CD4-positive, alpha-beta T cell (primary cell): ENCODE measurements at regions of chr11 and their contacts with region 1.

Region 1: GRCh38 chr11:66311965-66312548 is 4.8 kb downstream of the CD248 start:
- DNase-seq: peak; percentile 91 to 100 (median 99)
- ATAC-seq: peak; percentile 74
- H3K4me3 ChIP-seq: peak overlapping the region; percentile 61
- H3K4me3 Mint-ChIP-seq: peak overlapping the region; percentile 90
- H3K27ac ChIP-seq: peak overlapping the region; percentile 65 to 90
- H3K27ac Mint-ChIP-seq: peak overlapping the region; percentile 95
- H3K4me1 ChIP-seq: peaks cover 51% of the 10 kb centered on the region
- H3K4me1 Mint-ChIP-seq: peaks cover 22% of the 10 kb centered on the region
- H3K27me3 ChIP-seq: no peaks in the 10 kb centered on the region
- H3K27me3 Mint-ChIP-seq: peaks cover 4% of the 10 kb centered on the region
- CTCF ChIP-seq: peak; percentile 97

Region 2: DNA sequence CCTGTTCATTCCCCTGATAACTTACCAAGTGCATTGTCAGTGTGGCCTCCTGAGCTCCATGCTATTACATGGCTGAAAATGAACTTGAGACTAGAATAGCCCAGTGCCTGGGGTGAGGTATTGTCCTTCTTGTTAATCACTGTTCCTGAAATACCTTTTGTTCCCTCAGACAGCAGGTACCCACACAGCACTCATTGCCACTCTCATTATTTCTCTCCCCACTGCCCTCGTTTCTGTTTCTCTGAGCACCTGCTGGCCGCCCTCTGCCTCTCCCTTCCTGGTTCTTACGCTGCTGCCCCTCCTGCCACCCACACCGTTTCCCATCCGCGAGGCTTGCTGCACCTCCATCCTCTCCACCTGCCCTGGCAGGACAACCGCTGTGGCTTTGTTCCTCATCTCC is 80.5 kb before region 1 on chr11:
- CTCF ChIA-PET with region 1: no interaction called
- POLR2A ChIA-PET with region 1: no interaction called
- intact Hi-C with region 1: no loop called
- DNase-seq: no peak
- ATAC-seq: no peak
- H3K4me3 ChIP-seq: no peak overlapping the region
- H3K4me3 Mint-ChIP-seq: no peak overlapping the region
- H3K27ac ChIP-seq: no peak overlapping the region
- H3K27ac Mint-ChIP-seq: no peak overlapping the region
- H3K4me1 ChIP-seq: no peaks in the 10 kb centered on the region
- H3K4me1 Mint-ChIP-seq: no peaks in the 10 kb centered on the region
- H3K27me3 ChIP-seq: no peaks in the 10 kb centered on the region
- H3K27me3 Mint-ChIP-seq: no peaks in the 10 kb centered on the region
- CTCF ChIP-seq: no peak

Region 3: GRCh38 chr11:66328307-66329144 is 16.5 kb after region 1 on chr11:
- CTCF ChIA-PET with region 1: interaction called, 30 read pairs
- POLR2A ChIA-PET with region 1: interaction called, 39 read pairs
- intact Hi-C with region 1: loop called (anchors 1 kb)
- DNase-seq: peak; percentile 68 to 92 (median 77)
- ATAC-seq: peak; percentile 90
- H3K4me3 ChIP-seq: no peak overlapping the region
- H3K4me3 Mint-ChIP-seq: peak overlapping the region; percentile 42
- H3K27ac ChIP-seq: no peak overlapping the region
- H3K27ac Mint-ChIP-seq: peak overlapping the region; percentile 85
- H3K4me1 ChIP-seq: peaks cover 46% of the 10 kb centered on the region
- H3K4me1 Mint-ChIP-seq: peaks cover 39% of the 10 kb centered on the region
- H3K27me3 ChIP-seq: no peaks in the 10 kb centered on the region
- H3K27me3 Mint-ChIP-seq: no peaks in the 10 kb centered on the region
- CTCF ChIP-seq: peak; percentile 93

Region 4: GRCh38 chr11:66344550-66345315 is 32.7 kb after region 1 on chr11 and contains the start of gene BRMS1:
- CTCF ChIA-PET with region 1: interaction called, 24 read pairs
- POLR2A ChIA-PET with region 1: interaction called, 26 read pairs
- intact Hi-C with region 1: loop called (anchors 1 kb)
- DNase-seq: peak; percentile 86 to 98 (median 96)
- ATAC-seq: peak; percentile 80
- H3K4me3 ChIP-seq: peak within 1 kb of the TSS; percentile 100
- H3K4me3 Mint-ChIP-seq: peak within 1 kb of the TSS; percentile 97
- H3K27ac ChIP-seq: peak within 1 kb of the TSS; percentile 75 to 78
- H3K27ac Mint-ChIP-seq: peak within 1 kb of the TSS; percentile 94
- H3K4me1 ChIP-seq: peaks cover 56% of the 10 kb centered on the region
- H3K4me1 Mint-ChIP-seq: peaks cover 48% of the 10 kb centered on the region
- H3K27me3 ChIP-seq: no peaks in the 10 kb centered on the region
- H3K27me3 Mint-ChIP-seq: peaks cover 5% of the 10 kb centered on the region
- CTCF ChIP-seq: no peak
- total RNA-seq, gene BRMS1: 52.7 to 58.4 TPM

Region 5: GRCh38 chr11:66386171-66387069 is 74.4 kb after region 1 on chr11:
- CTCF ChIA-PET with region 1: interaction called, 22 read pairs
- POLR2A ChIA-PET with region 1: interaction called, 20 read pairs
- intact Hi-C with region 1: loop called (anchors 1 kb)
- DNase-seq: peak; percentile 76 to 90 (median 82)
- ATAC-seq: peak; percentile 78
- H3K4me3 ChIP-seq: no peak overlapping the region
- H3K4me3 Mint-ChIP-seq: no peak overlapping the region
- H3K27ac ChIP-seq: no peak overlapping the region
- H3K27ac Mint-ChIP-seq: no peak overlapping the region
- H3K4me1 ChIP-seq: peaks cover 7% of the 10 kb centered on the region
- H3K4me1 Mint-ChIP-seq: peaks cover 6% of the 10 kb centered on the region
- H3K27me3 ChIP-seq: no peaks in the 10 kb centered on the region
- H3K27me3 Mint-ChIP-seq: peaks cover 10% of the 10 kb centered on the region
- CTCF ChIP-seq: peak; percentile 84